ENCODE measurements at regions of chr9 and their contacts with region 1.

Region 1: DNA sequence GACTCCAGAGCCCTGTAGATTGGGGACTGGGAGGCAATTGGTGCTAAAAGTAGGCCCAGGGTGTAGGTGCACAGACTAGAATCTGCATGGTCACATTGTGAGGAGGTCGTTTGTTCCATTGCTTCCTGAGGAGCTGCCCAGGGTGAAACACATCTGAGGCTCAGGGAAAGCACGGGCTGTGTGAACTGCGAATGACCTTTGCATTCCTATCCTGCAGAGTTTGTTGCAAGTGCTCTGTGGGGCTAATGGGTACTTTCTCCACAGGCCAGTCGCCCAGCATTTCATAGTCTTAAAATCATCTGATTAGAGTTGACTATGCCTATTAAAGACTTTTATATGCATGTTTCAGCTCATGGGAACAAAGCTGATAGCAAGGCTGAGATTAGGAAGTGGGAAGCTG is 14.4 kb upstream of the SLC46A2 start:
- DNase-seq: no peak
- H3K4me3 ChIP-seq: no peak overlapping the region
- H3K27ac ChIP-seq: no peak overlapping the region
- H3K4me1 ChIP-seq: no peaks in the 10 kb centered on the region
- H3K27me3 ChIP-seq: peaks cover 5 to 17% of the 10 kb centered on the region in 2 experiments
- CTCF ChIP-seq: no peak
- POLR2A ChIP-seq: no peak

Region 2: DNA sequence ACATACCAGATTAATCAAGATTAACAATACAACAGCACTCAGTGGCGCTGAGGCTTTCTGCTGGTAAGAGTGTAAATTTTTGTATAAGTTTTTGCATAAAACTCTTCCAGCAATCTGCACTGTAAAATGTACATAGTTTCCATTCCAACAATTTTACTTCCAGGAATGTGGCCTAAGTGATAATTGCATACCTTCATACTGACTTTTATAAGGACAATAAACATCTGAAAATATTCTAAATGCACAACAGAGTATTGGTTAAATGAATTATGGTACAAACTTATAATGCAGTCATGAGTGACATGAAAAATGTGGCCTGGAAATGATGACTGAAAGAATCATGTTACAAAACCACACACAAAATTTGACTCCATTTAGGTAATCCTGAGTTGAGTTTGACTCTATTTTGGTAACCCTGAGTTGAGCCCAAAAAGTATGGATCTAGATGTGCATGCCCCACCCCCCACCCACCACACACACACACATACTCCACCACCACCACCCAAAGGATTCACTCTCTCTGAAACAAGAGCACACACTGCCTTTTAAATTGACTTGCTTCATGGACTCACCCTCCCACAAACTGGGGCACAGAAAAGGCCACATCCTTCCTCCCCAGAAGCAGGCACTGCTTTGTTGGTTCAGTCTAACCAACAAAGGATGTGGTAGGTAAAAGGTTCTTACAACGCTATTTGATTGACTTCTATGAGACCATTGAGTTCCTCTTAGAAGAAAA is 867.6 kb before region 1 on chr9:
- CTCF ChIA-PET with region 1: no interaction called
- POLR2A ChIA-PET with region 1: no interaction called
- dilution Hi-C with region 1: no loop called
- intact Hi-C with region 1: no loop called
- DNase-seq: no peak
- H3K4me3 ChIP-seq: no peak overlapping the region
- H3K27ac ChIP-seq: no peak overlapping the region
- H3K4me1 ChIP-seq: peaks cover 29% of the 10 kb centered on the region
- H3K27me3 ChIP-seq: no peaks in the 10 kb centered on the region
- CTCF ChIP-seq: no peak
- POLR2A ChIP-seq: no peak

Region 3: DNA sequence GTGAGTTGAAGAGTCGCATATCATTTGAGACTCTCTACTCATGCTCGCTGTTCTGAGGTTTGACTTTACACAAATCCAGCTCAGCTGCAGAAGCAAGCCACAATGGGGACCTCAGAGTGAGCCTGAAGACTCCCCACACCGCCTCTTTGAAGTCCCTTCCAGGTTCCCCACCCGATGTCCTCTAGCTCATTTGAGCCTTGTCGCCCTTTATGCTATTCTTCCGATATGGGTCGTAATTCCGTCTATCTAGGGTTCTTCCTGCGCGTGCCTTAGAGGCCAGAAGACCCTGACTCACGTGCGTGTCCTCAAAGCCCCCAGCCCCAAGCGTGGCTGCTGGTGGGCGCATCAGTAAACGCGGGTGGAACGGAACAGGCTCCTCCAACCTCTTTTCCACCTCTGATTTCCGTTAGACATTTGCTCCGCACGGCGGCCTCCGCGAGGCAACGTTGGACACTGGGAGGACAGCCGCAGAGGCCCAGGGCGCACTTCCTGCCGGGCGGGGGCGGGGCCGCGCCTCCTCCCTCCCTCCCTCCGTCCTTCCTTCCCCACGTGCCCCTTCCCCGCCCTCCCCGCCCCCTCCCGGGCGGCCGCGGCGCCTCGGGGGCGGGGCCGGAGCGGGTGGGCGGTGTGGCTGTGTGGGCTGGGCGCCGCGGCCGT is 154.8 kb before region 1 on chr9 and contains the start of gene SNX30:
- CTCF ChIA-PET with region 1: no interaction called
- POLR2A ChIA-PET with region 1: no interaction called
- dilution Hi-C with region 1: no loop called
- intact Hi-C with region 1: loop called (anchors 5 kb)
- DNase-seq: peak; percentile 81
- H3K4me3 ChIP-seq: peak within 1 kb of the TSS; percentile 47 to 98 (median 58)
- H3K27ac ChIP-seq: no peak within 1 kb of the TSS
- H3K4me1 ChIP-seq: peaks cover 10% of the 10 kb centered on the region
- H3K27me3 ChIP-seq: no peaks in the 10 kb centered on the region
- CTCF ChIP-seq: no peak
- POLR2A ChIP-seq: peak; percentile 85
- total RNA-seq, gene SNX30: 6.3 and 6.8 TPM in 2 replicates

Region 4: GRCh38 chr9:112844771-112845542 is 60.1 kb before region 1 on chr9:
- CTCF ChIA-PET with region 1: interaction called, 263 read pairs
- POLR2A ChIA-PET with region 1: no interaction called
- dilution Hi-C with region 1: no loop called
- intact Hi-C with region 1: loop called (anchors 1 kb)
- DNase-seq: peak; percentile 71
- H3K4me3 ChIP-seq: no peak overlapping the region
- H3K27ac ChIP-seq: no peak overlapping the region
- H3K4me1 ChIP-seq: peaks cover 5% of the 10 kb centered on the region
- H3K27me3 ChIP-seq: no peaks in the 10 kb centered on the region
- CTCF ChIP-seq: peak; percentile 92 to 98
- POLR2A ChIP-seq: no peak

Region 5: GRCh38 chr9:112887381-112887780 is 17.7 kb before region 1 on chr9:
- CTCF ChIA-PET with region 1: interaction called, 24 read pairs
- POLR2A ChIA-PET with region 1: no interaction called
- dilution Hi-C with region 1: no loop called
- intact Hi-C with region 1: no loop called
- DNase-seq: no peak
- H3K4me3 ChIP-seq: no peak overlapping the region
- H3K27ac ChIP-seq: no peak overlapping the region
- H3K4me1 ChIP-seq: no peaks in the 10 kb centered on the region
- H3K27me3 ChIP-seq: peaks cover 12 to 16% of the 10 kb centered on the region in 2 experiments
- CTCF ChIP-seq: no peak
- POLR2A ChIP-seq: no peak

Region 6: GRCh38 chr9:113511856-113512761 is 607.0 kb after region 1 on chr9:
- CTCF ChIA-PET with region 1: no interaction called
- POLR2A ChIA-PET with region 1: no interaction called
- dilution Hi-C with region 1: no loop called
- intact Hi-C with region 1: no loop called
- DNase-seq: no peak
- H3K4me3 ChIP-seq: no peak overlapping the region
- H3K27ac ChIP-seq: peak overlapping the region; percentile 28
- H3K4me1 ChIP-seq: peaks cover 57% of the 10 kb centered on the region
- H3K27me3 ChIP-seq: no peaks in the 10 kb centered on the region
- CTCF ChIP-seq: no peak
- POLR2A ChIP-seq: no peak